ENCODE measurements at regions of chr15 and their contacts with region 1.

Region 1: DNA sequence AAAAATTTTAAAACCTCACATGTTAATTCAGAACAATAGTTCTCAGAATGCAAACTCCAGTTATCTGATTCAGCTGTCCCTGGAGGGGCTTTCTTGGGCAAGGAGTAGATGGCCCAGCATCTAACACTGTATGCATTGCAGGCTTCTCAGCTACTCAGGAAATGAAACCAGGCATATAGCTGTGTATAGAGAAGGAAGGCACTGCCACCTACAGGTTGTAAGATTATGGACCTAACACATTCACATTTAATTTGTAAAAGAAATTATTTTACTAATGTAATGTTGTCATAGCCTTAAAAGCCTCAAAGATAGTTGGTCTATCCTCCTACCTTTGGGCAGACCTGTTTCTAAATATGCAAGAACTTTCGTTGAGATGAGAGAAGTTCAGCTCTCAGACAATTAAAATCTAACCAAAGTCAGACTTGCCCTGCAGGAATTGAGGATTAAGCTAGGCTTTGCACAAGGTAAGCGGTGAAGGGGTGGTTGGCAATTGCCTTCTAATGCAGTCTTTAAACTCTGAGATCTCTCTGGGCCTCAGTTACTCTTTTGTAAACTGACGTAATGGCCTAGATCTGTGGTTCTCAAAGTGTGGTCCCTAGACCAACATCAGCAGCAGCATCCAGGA is 132.8 kb upstream of the SLC24A5 start:
- DNase-seq: peak; percentile 10 to 15
- H3K4me3 ChIP-seq: no peak overlapping the region
- H3K27ac ChIP-seq: no peak overlapping the region
- H3K4me1 ChIP-seq: peaks cover 0 to 8% of the 10 kb centered on the region in 2 donors
- H3K27me3 ChIP-seq: no peaks in the 10 kb centered on the region
- CTCF ChIP-seq: peak in 5 of 6 experiments; percentile 26 to 78 (median 70)
- POLR2A ChIP-seq: no peak

Region 2: GRCh38 chr15:47196057-47196456 is 792.0 kb before region 1 on chr15:
- intact Hi-C with region 1: loop called (anchors 2 kb)
- DNase-seq: peak; percentile 82 to 88
- H3K4me3 ChIP-seq: no peak overlapping the region
- H3K27ac ChIP-seq: no peak overlapping the region
- H3K4me1 ChIP-seq: peaks cover 10 to 23% of the 10 kb centered on the region in 2 donors
- H3K27me3 ChIP-seq: no peaks in the 10 kb centered on the region
- CTCF ChIP-seq: peak; percentile 54 to 91 (median 82)
- POLR2A ChIP-seq: no peak

Region 3: GRCh38 chr15:47708161-47708980 is 279.6 kb before region 1 on chr15:
- intact Hi-C with region 1: loop called (anchors 5 kb)
- DNase-seq: no peak
- H3K4me3 ChIP-seq: no peak overlapping the region
- H3K27ac ChIP-seq: no peak overlapping the region
- H3K4me1 ChIP-seq: no peaks in the 10 kb centered on the region
- H3K27me3 ChIP-seq: no peaks in the 10 kb centered on the region
- CTCF ChIP-seq: no peak
- POLR2A ChIP-seq: no peak

Measured in thyroid gland (tissue), 4 donors.